Transverse colon (tissue), 4 donors: ENCODE measurements at regions of chr13 and their contacts with region 1.

Region 1: GRCh38 chr13:27977476-27978300 is 8.6 kb upstream of the CDX2 start:
- DNase-seq: no peak
- H3K4me3 ChIP-seq: peak overlapping the region; percentile 24 to 61 (median 60)
- H3K27ac ChIP-seq: peak overlapping the region; percentile 84 to 97 (median 92)
- H3K4me1 ChIP-seq: peaks cover under 1 to 44% (median 19%) of the 10 kb centered on the region in 4 donors
- H3K27me3 ChIP-seq: peaks cover 92% of the 10 kb centered on the region
- CTCF ChIP-seq: peak in 1 of 5 experiments; percentile 22
- EP300 ChIP-seq: no peak
- POLR2A ChIP-seq: no peak

Region 2: DNA sequence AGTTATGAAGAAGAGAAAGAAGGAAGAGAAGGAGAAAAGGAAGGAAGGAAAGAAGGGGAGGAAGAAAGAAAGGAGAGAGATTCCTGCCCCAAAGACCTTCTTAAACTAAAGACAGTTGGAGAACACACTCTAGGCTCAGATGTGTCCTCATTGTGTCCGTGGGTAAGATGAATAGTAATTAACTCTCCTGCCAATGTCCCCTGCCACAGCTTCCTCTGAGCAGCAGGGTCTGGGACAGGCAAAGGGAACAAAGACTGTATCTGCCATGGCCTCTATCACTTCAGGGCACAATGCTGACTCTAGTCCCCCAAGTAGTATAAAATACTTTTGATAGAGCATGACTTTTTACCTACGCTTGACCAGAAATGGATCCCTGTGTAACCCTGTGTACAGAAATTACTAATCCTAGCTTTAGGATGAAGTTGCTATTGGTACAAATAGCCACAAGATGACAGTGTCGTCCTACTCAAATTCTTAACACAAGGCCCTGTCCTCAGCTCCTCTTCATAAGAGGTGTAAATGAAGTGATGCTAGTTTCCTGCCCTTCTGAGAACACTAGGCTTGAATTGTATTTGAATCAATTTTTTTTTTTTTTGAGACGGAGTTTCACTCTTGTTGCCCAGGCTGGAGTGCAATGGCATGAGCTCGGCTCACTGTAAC is 1030.9 kb before region 1 on chr13:
- in situ Hi-C with region 1: loop called in 2 of 4 experiments (anchors 10 kb)
- intact Hi-C with region 1: loop called (anchors 10 kb)
- DNase-seq: no peak
- H3K4me3 ChIP-seq: no peak overlapping the region
- H3K27ac ChIP-seq: peak overlapping the region in 1 of 4 donors; percentile 4
- H3K4me1 ChIP-seq: peaks cover 0 to 42% (median 22%) of the 10 kb centered on the region in 4 donors
- H3K27me3 ChIP-seq: no peaks in the 10 kb centered on the region
- CTCF ChIP-seq: peak; percentile 75 to 95 (median 80)
- EP300 ChIP-seq: no peak
- POLR2A ChIP-seq: no peak

Region 3: GRCh38 chr13:26965952-26966700 is 1011.6 kb before region 1 on chr13:
- in situ Hi-C with region 1: loop called in 1 of 4 experiments (anchors 10 kb)
- intact Hi-C with region 1: no loop called
- DNase-seq: no peak
- H3K4me3 ChIP-seq: no peak overlapping the region
- H3K27ac ChIP-seq: peak overlapping the region; percentile 70 to 84 (median 82)
- H3K4me1 ChIP-seq: peaks cover 18 to 96% (median 61%) of the 10 kb centered on the region in 4 donors
- H3K27me3 ChIP-seq: no peaks in the 10 kb centered on the region
- CTCF ChIP-seq: no peak
- EP300 ChIP-seq: no peak
- POLR2A ChIP-seq: no peak

Region 4: GRCh38 chr13:27362064-27362883 is 615.4 kb before region 1 on chr13:
- in situ Hi-C with region 1: loop called in 1 of 4 experiments (anchors 10 kb)
- intact Hi-C with region 1: no loop called
- DNase-seq: peak; percentile 92
- H3K4me3 ChIP-seq: peak overlapping the region; percentile 28 to 50 (median 32)
- H3K27ac ChIP-seq: peak overlapping the region; percentile 11 to 52 (median 21)
- H3K4me1 ChIP-seq: peaks cover 0 to 17% (median 9%) of the 10 kb centered on the region in 4 donors
- H3K27me3 ChIP-seq: peaks cover 5% of the 10 kb centered on the region
- CTCF ChIP-seq: peak; percentile 90 to 96 (median 94)
- EP300 ChIP-seq: no peak
- POLR2A ChIP-seq: no peak

Region 5: GRCh38 chr13:27374650-27375049 is 603.0 kb before region 1 on chr13:
- in situ Hi-C with region 1: loop called (anchors 10 kb)
- intact Hi-C with region 1: loop called (anchors 5 kb)
- DNase-seq: peak; percentile 77
- H3K4me3 ChIP-seq: no peak overlapping the region
- H3K27ac ChIP-seq: peak overlapping the region; percentile 28 to 56 (median 44)
- H3K4me1 ChIP-seq: peaks cover 0 to 24% (median 0%) of the 10 kb centered on the region in 4 donors
- H3K27me3 ChIP-seq: no peaks in the 10 kb centered on the region
- CTCF ChIP-seq: peak; percentile 61 to 83 (median 68)
- EP300 ChIP-seq: no peak
- POLR2A ChIP-seq: no peak